A549 (cell line): ENCODE measurements at regions of chr15 and their contacts with region 1.

Region 1: GRCh38 chr15:75639709-75640482 is at the start of gene IMP3:
- DNase-seq: peak; percentile 99
- ATAC-seq: peak; percentile 89 to 95
- H3K4me3 ChIP-seq: peak within 1 kb of the TSS; percentile 67
- H3K27ac ChIP-seq: peak within 1 kb of the TSS; percentile 91 to 94
- H3K4me1 ChIP-seq: peaks cover 18% of the 10 kb centered on the region
- CTCF ChIP-seq: no peak
- EP300 ChIP-seq: no peak
- POLR2A ChIP-seq: peak; percentile 96
- RAD21 ChIP-seq: no peak
- polyA plus RNA-seq, gene IMP3: 80.6 and 94.7 TPM in 2 replicates

Region 2: GRCh38 chr15:75453703-75454470 is 186.0 kb before region 1 on chr15:
- CTCF ChIA-PET with region 1: interaction called, 4 read pairs
- POLR2A ChIA-PET with region 1: interaction called, 79 read pairs
- DNase-seq: peak; percentile 99 to 100
- ATAC-seq: peak; percentile 22 to 57
- H3K4me3 ChIP-seq: peak overlapping the region; percentile 74
- H3K27ac ChIP-seq: peak overlapping the region; percentile 92
- H3K4me1 ChIP-seq: peaks cover 18% of the 10 kb centered on the region
- CTCF ChIP-seq: no peak
- EP300 ChIP-seq: no peak
- POLR2A ChIP-seq: peak; percentile 53
- RAD21 ChIP-seq: no peak; a peak in 1 of 5 replicates

Region 3: GRCh38 chr15:75578948-75579920 is 60.7 kb before region 1 on chr15 and contains the start of gene PTPN9:
- CTCF ChIA-PET with region 1: interaction called, 5 read pairs
- POLR2A ChIA-PET with region 1: interaction called, 25 read pairs
- DNase-seq: peak; percentile 77 to 82
- ATAC-seq: peak; percentile 88 to 90
- H3K4me3 ChIP-seq: peak within 1 kb of the TSS; percentile 67
- H3K27ac ChIP-seq: peak within 1 kb of the TSS; percentile 96 to 97
- H3K4me1 ChIP-seq: peaks cover 16% of the 10 kb centered on the region
- CTCF ChIP-seq: peak; percentile 65
- EP300 ChIP-seq: no peak
- POLR2A ChIP-seq: peak; percentile 62
- RAD21 ChIP-seq: peak in 1 of 2 experiments; percentile 59; a peak in 3 of 5 replicates
- polyA plus RNA-seq, gene PTPN9: 60.2 and 71.2 TPM in 2 replicates

Region 4: GRCh38 chr15:75625542-75626347 is 14.2 kb before region 1 on chr15 and contains the start of gene SNUPN:
- CTCF ChIA-PET with region 1: interaction called, 30 read pairs
- POLR2A ChIA-PET with region 1: interaction called, 94 read pairs
- DNase-seq: peak; percentile 98 to 99
- ATAC-seq: peak; percentile 95
- H3K4me3 ChIP-seq: peak within 1 kb of the TSS; percentile 96
- H3K27ac ChIP-seq: peak within 1 kb of the TSS; percentile 98 to 100
- H3K4me1 ChIP-seq: peaks cover 26% of the 10 kb centered on the region
- CTCF ChIP-seq: no peak
- EP300 ChIP-seq: no peak
- POLR2A ChIP-seq: peak; percentile 90
- RAD21 ChIP-seq: no peak
- polyA plus RNA-seq, gene SNUPN: 33.6 and 38.5 TPM in 2 replicates

Region 5: DNA sequence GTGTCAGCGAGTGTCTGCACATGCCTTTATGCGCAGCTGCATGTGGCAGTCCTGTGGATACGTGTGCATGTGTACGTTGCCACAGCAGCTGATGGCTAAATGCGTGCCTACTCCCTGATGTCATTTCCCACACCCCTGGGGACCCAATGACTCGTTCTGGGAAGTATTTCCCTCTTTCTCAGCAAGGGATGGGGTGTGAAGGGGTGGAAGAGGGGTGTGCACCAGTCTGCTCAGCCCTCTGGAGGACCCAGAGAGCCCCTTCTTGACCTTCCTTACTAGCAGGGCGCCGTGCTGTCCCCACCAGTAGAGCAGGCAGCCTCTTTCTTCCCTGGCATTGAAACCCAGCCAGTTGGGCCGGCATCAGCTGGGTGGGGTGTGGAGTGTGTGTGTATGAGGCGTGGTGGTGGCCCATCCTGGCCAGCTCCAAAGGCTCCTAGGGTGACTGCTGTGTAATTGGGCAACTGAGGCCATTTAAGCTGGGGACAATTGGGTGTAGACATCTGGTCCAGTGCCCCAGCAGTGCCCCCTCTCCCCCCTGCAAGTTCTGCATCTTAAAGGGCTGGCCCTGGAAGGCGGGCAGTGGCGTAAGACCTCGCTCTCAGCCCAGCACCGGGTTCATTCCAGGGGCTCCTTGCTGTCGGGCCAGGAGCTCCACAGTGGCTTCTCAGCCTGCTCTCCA is 27.1 kb after region 1 on chr15:
- CTCF ChIA-PET with region 1: interaction called, 394 read pairs
- POLR2A ChIA-PET with region 1: interaction called, 14 read pairs
- DNase-seq: peak; percentile 96 to 98
- ATAC-seq: peak; percentile 85
- H3K4me3 ChIP-seq: no peak overlapping the region
- H3K27ac ChIP-seq: peak overlapping the region; percentile 70 to 83
- H3K4me1 ChIP-seq: peaks cover 65% of the 10 kb centered on the region
- CTCF ChIP-seq: no peak
- EP300 ChIP-seq: peak; percentile 27 to 49; a peak in 3 of 5 replicates
- POLR2A ChIP-seq: no peak
- RAD21 ChIP-seq: no peak